Stomach (tissue), 19 donors: ENCODE measurements at regions of chr9 and their contacts with region 1.

Region 1: DNA sequence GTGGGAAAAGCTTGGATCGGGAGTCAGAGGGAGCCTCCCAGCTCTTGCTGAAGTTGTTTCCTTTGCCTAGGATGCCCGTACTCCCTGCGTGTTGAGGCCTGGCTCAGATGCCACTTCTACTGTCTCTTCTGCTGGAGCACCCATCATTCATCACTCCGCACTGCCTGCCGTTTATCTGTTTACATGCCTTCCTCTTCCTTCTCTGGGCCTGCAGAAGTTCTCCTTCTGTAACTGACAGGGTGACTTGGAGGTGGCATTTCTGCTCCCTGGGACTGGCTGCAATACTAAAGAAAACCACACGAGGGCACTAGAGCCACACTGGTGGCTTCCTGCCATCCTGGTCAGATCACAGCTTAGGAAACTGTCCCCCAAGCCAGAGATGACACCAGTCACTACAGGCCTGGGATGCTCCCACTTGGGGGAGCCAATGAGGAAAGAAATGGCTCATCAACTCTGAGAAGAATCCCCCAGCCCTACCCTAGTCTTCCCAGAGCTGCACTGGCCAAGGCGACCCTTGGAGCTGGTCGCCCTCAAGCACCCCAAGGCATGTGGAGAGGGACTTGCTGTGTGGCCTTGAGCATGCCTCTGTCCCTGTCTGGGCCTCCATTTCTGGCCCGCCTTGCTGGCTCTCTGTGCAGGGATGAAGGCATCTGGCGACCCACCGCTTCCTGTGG is 9.7 kb upstream of the SLC25A51 start:
- DNase-seq: peak; percentile 85 to 92
- H3K4me3 ChIP-seq: no peak overlapping the region
- H3K27ac ChIP-seq: no peak overlapping the region
- H3K4me1 ChIP-seq: peaks cover 0 to 17% (median 9%) of the 10 kb centered on the region in 4 donors
- H3K27me3 ChIP-seq: no peaks in the 10 kb centered on the region
- CTCF ChIP-seq: peak in 6 of 7 experiments; percentile 50 to 99 (median 96)
- EP300 ChIP-seq: no peak
- POLR2A ChIP-seq: no peak

Region 2: GRCh38 chr9:36728651-36729520 is 1184.7 kb before region 1 on chr9:
- intact Hi-C with region 1: no loop called
- DNase-seq: peak; percentile 69 to 86
- H3K4me3 ChIP-seq: no peak overlapping the region
- H3K27ac ChIP-seq: no peak overlapping the region
- H3K4me1 ChIP-seq: no peaks in the 10 kb centered on the region
- H3K27me3 ChIP-seq: peaks cover 0 to 10% (median 0%) of the 10 kb centered on the region in 3 donors
- CTCF ChIP-seq: peak in 2 of 7 experiments; percentile 22 to 53
- EP300 ChIP-seq: no peak
- POLR2A ChIP-seq: no peak

Region 3: DNA sequence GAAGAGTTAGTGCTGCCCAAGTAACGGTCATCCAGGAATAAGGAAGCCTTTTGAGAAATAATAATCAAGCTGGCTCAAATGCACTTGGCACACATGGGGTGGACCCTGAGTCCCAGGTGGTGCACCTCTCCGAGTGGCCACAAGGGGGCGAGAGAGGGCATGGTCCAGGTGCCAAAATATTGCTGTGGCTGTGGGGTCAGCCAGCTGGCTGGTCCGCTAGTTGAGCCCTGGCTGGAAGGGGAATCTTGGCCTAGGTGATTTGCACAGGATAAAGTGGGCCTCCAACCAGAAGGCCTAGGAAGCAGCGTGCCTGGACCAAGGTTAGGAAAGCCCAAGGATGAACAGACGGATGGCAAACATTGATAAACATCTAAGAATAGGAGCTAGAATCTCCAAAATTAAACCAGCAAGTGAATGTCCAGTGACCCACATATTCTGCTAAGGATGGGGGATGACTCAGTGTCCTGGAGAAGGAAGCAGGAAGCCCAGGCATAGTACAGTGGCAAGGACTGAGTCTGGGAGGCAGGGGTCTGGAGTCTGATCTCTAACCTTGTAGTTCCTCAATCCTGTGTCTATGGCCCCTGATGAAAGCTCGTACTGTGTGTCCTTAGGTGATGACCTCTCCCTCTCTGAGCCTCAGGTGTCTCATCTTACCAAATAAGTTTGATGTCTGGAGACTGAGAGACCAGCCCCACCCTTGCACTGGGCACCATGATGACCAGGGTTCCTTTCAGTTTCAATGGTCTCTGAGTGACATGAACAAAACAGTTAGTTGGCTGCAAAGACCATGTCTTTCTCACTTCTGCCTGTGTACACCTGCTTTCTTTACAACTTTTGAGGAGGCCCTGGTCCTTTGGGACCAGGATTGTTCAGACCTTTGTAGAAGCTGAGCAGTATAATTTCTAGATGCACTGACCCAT is 174.6 kb after region 1 on chr9:
- intact Hi-C with region 1: loop called (anchors 5 kb)
- DNase-seq: peak; percentile 83
- H3K4me3 ChIP-seq: no peak overlapping the region
- H3K27ac ChIP-seq: no peak overlapping the region
- H3K4me1 ChIP-seq: peaks cover 0 to 14% (median 2%) of the 10 kb centered on the region in 4 donors
- H3K27me3 ChIP-seq: no peaks in the 10 kb centered on the region
- CTCF ChIP-seq: peak in 5 of 7 experiments; percentile 84 to 99 (median 97)
- EP300 ChIP-seq: no peak
- POLR2A ChIP-seq: no peak

Region 4: DNA sequence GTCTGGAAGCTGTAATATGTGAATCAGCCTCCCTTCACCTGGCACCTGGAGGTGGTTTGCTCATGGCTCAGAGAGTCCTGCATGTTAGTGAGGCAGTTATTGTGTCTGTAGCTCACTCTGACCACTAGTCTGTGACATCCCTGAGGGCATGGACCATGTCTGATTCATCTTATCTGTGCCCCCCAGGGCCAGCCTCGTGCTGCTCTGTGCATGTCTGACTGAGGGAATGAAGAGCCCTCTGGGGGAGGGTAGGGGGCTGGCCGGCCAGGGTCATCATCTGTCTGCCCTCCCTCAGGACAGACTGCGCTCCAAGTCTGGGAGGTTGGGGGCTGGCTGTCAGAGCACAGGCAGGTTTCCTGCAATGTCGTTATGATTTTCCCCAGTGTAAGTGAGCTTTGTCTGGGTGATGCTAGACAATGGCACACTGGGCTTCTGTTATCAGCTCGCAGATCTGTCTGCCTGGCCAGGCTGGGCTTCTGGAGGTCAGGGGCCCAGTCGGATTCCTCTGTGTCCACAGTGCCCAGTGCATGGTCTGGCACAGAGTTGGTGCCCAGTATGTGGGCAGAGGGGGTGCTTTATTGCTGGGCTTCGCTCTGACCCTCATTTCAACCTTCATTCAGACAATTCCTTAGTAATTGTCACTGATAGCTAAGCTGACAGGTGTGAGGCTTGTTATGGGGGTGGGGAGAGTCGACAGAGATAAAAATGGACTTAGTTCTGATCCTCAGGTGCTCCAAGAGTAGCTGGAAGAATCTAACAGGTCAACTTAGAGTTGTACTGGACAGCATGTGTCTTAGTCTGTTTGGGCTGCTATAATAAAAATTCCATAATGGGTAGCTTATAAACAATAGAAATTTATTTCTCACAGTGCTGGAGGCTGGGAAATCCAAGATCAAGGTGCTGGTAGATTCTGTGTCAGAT is 241.1 kb after region 1 on chr9:
- intact Hi-C with region 1: loop called (anchors 5 kb)
- DNase-seq: no peak
- H3K4me3 ChIP-seq: no peak overlapping the region
- H3K27ac ChIP-seq: no peak overlapping the region
- H3K4me1 ChIP-seq: peaks cover 0 to 11% (median 3%) of the 10 kb centered on the region in 4 donors
- H3K27me3 ChIP-seq: peaks cover 0 to 13% (median 0%) of the 10 kb centered on the region in 3 donors
- CTCF ChIP-seq: no peak
- EP300 ChIP-seq: no peak
- POLR2A ChIP-seq: no peak

Region 5: DNA sequence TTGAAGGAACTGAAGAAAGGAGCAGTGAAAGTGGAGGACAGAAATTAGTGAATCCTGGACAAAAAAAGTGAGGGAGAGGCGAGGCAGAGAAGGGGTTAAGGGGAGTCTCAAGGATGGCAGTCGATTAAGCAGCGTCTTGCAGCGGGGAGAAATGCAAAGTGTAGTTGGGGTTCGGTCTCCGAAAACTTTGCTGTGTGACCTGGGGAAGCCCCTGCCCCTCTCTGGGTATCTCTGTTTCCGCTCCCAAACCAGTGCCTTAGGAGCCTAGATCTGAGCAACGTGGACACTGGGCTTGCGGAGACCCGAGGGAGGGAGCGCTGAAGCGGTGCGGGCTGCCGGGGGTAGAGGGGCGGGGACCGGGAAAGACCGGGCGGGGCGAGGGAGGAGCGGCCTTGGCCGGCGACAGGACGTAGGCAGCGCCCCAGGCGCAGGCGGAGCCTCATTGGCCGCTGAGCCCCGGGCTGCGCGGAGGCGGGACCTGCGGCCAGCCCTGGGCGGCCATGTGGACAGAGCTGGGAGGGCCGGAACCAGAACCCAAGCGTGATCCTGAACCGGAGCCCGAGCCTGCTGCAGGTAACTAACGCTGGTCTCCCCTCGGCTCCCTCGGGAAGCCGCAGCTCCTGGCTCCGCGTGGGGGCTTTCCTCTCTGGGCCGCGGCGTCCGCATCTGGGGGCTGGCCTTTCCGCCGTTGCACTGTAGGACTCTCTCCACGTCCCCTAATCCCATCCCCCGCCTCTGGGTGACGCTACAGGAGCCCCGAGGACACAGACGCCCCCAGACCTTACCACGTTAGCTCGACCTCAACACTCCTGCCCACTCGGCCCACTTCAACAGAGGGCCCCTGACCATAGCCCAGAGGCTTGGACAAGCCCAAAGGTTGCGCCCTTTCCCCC is 478.9 kb after region 1 on chr9 and contains the start of gene ALDH1B1:
- intact Hi-C with region 1: loop called (anchors 10 kb)
- DNase-seq: peak; percentile 90 to 97
- H3K4me3 ChIP-seq: peak within 1 kb of the TSS; percentile 64 to 89 (median 80)
- H3K27ac ChIP-seq: peak within 1 kb of the TSS; percentile 30 to 94 (median 87)
- H3K4me1 ChIP-seq: peaks cover 11 to 61% (median 23%) of the 10 kb centered on the region in 4 donors
- H3K27me3 ChIP-seq: no peaks in the 10 kb centered on the region
- CTCF ChIP-seq: peak in 1 of 7 experiments; percentile 17
- EP300 ChIP-seq: no peak
- POLR2A ChIP-seq: peak in 1 of 4 donors; percentile 7
- total RNA-seq, gene ALDH1B1: 0.58 to 68.7 (median 28.4) TPM